CD8-positive, alpha-beta memory T cell (primary cell): ENCODE measurements at regions of chr6 and their contacts with region 1.

Region 1: GRCh38 chr6:34602318-34603111 is 46.4 kb upstream of the SPDEF start:
- DNase-seq: no peak
- H3K4me3 ChIP-seq: no peak overlapping the region
- H3K4me3 Mint-ChIP-seq: peak overlapping the region in 1 of 7 donors; percentile 18
- H3K27ac ChIP-seq: no peak overlapping the region
- H3K27ac Mint-ChIP-seq: peak overlapping the region in 3 of 8 donors; percentile 6 to 20 (median 19)
- H3K4me1 ChIP-seq: peaks cover 7% of the 10 kb centered on the region
- H3K4me1 Mint-ChIP-seq: peaks cover 33 to 72% (median 66%) of the 10 kb centered on the region in 3 donors
- H3K27me3 ChIP-seq: no peaks in the 10 kb centered on the region
- H3K27me3 Mint-ChIP-seq: no peaks in the 10 kb centered on the region

Region 2: GRCh38 chr6:34592208-34592952 is 10.1 kb before region 1 on chr6:
- CTCF ChIA-PET with region 1: no interaction called
- POLR2A ChIA-PET with region 1: interaction called, 10 read pairs
- DNase-seq: no peak
- H3K4me3 ChIP-seq: no peak overlapping the region
- H3K4me3 Mint-ChIP-seq: no peak overlapping the region
- H3K27ac ChIP-seq: no peak overlapping the region
- H3K27ac Mint-ChIP-seq: peak overlapping the region in 3 of 8 donors; percentile 4 to 22 (median 5)
- H3K4me1 ChIP-seq: peaks cover 2% of the 10 kb centered on the region
- H3K4me1 Mint-ChIP-seq: peaks cover 30 to 57% (median 43%) of the 10 kb centered on the region in 3 donors
- H3K27me3 ChIP-seq: no peaks in the 10 kb centered on the region
- H3K27me3 Mint-ChIP-seq: no peaks in the 10 kb centered on the region

Region 3: GRCh38 chr6:34696739-34697543 is 94.4 kb after region 1 on chr6 and contains the start of gene ILRUN:
- CTCF ChIA-PET with region 1: no interaction called
- POLR2A ChIA-PET with region 1: no interaction called
- DNase-seq: peak; percentile 92 to 98 (median 95)
- H3K4me3 ChIP-seq: peak within 1 kb of the TSS; percentile 99
- H3K4me3 Mint-ChIP-seq: peak within 1 kb of the TSS; percentile 94 to 100 (median 97)
- H3K27ac ChIP-seq: peak within 1 kb of the TSS; percentile 96
- H3K27ac Mint-ChIP-seq: peak within 1 kb of the TSS; percentile 95 to 100 (median 100)
- H3K4me1 ChIP-seq: peaks cover 23% of the 10 kb centered on the region
- H3K4me1 Mint-ChIP-seq: peaks cover 41 to 54% (median 53%) of the 10 kb centered on the region in 3 donors
- H3K27me3 ChIP-seq: no peaks in the 10 kb centered on the region
- H3K27me3 Mint-ChIP-seq: no peaks in the 10 kb centered on the region
- total RNA-seq, gene ILRUN: 53.3 to 61.9 TPM